Heart left ventricle (tissue), 16 donors: ENCODE measurements at regions of chr6 and their contacts with region 1.

Region 1: DNA sequence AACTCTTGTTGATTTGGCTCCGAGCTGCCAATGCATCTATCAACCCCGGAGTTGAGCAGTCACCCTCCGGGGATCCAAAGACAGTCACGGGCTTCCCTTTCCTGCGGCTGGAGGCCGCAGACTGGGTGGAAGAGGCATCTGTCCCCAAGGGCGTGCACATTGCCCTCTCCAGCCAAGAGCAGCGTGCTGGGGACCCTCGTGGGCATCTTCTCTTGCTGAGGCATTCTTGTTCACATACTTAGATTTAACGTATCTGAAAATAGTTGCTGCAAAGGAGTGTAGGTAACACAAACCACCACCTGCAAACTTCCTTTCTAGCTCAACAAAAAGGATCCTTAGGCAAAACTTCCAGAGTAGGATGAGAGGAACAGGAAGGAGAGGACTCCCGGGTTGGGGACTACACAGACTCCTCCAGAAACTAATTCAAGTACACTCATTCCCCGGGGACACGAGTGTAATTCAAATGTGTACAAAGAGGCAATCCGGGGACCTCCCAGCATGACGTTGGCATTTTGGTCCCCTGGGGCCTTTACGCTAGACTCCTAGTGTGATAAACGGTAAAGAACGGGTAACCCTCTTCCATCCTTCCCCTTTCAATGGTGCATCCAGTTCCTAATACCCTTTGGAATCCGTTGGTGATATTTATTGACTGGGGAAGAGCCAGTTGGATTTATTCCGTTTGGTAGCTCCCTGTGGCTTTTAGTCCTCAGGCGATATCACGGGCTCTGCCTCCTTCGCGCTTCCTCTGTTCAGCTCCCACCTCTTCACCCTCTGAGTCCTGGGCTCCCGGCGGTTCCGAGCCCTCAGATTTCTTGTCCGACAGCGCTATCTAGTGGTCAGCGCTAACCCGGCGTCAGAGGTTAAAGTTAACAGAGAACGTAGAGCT is 2.7 kb upstream of the COL12A1 start:
- DNase-seq: peak; percentile 81 to 87 (median 85)
- ATAC-seq: peak; percentile 62 to 82 (median 70)
- H3K4me3 ChIP-seq: peak overlapping the region in 10 of 12 donors; percentile 17 to 53 (median 36)
- H3K27ac ChIP-seq: peak overlapping the region in 8 of 12 donors; percentile 31 to 80 (median 56)
- H3K4me1 ChIP-seq: peaks cover 0 to 64% (median 33%) of the 10 kb centered on the region in 12 donors
- H3K27me3 ChIP-seq: peaks cover 2 to 50% (median 25%) of the 10 kb centered on the region in 9 donors
- CTCF ChIP-seq: peak; percentile 78 to 95 (median 87)
- POLR2A ChIP-seq: no peak

Region 2: DNA sequence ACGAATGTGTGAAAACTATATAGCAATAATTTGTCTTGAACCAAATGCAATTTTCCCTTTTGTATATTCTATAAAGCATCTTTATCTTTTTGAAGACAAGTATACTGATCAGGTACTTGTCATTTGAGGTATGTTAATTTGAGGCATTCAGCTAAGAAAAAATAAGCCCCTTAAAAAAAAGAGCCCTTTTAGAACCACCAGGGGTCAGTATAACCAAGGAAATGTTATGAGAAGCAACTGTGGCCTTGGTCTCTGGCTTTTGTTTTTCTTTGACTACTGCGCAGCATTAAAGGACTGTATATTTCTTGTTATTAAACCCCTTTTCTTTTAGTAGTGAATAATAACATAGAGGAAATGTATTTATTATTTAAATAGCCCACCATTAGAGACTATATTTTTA is 1469.4 kb before region 1 on chr6:
- intact Hi-C with region 1: loop called (anchors 2 to 5 kb)
- DNase-seq: no peak
- ATAC-seq: peak; percentile 44 to 85 (median 64)
- H3K4me3 ChIP-seq: no peak overlapping the region
- H3K27ac ChIP-seq: no peak overlapping the region
- H3K4me1 ChIP-seq: peaks cover 0 to 11% (median 0%) of the 10 kb centered on the region in 12 donors
- H3K27me3 ChIP-seq: no peaks in the 10 kb centered on the region
- CTCF ChIP-seq: peak; percentile 67 to 90 (median 84)
- POLR2A ChIP-seq: no peak

Region 3: GRCh38 chr6:73854998-73855718 is 1353.4 kb before region 1 on chr6:
- intact Hi-C with region 1: loop called in 9 of 10 experiments (anchors 5 to 10 kb)
- DNase-seq: peak in 1 of 5 donors; percentile 23
- ATAC-seq: peak in 2 of 4 donors; percentile 42 to 68
- H3K4me3 ChIP-seq: peak overlapping the region in 2 of 12 donors; percentile 23 to 25
- H3K27ac ChIP-seq: peak overlapping the region in 7 of 12 donors; percentile 1 to 49 (median 26)
- H3K4me1 ChIP-seq: peaks cover 0 to 3% (median 0%) of the 10 kb centered on the region in 12 donors
- H3K27me3 ChIP-seq: no peaks in the 10 kb centered on the region
- CTCF ChIP-seq: peak; percentile 59 to 94 (median 72)
- POLR2A ChIP-seq: no peak

Region 4: DNA sequence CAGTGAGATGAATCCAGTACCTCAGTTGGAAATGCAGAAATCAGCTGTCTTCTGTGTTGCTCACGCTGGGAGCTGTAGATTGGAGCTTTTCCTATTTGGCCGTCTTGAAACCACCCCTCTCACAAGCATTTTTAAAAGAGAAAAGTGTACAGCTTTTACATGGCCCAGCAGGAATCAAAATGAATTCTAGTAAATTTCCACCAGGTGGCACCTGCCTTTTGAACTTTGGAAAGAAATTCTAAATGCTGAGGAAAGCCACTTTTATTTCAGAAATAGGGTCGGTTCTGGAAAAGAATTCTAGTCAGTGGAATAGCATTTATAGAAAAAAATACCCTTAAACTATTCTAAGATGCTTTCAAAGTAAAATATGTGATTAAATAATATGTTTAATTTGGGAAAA is 864.7 kb before region 1 on chr6:
- intact Hi-C with region 1: loop called in 1 of 10 experiments (anchors 10 kb)
- DNase-seq: no peak
- ATAC-seq: no peak
- H3K4me3 ChIP-seq: no peak overlapping the region
- H3K27ac ChIP-seq: no peak overlapping the region
- H3K4me1 ChIP-seq: peaks cover 0 to 9% (median 0%) of the 10 kb centered on the region in 12 donors
- H3K27me3 ChIP-seq: no peaks in the 10 kb centered on the region
- CTCF ChIP-seq: peak in 3 of 12 donors; percentile 26
- POLR2A ChIP-seq: no peak

Region 5: GRCh38 chr6:74574794-74575193 is 633.7 kb before region 1 on chr6:
- intact Hi-C with region 1: loop called in 2 of 10 experiments (anchors 10 kb)
- DNase-seq: no peak
- ATAC-seq: peak in 1 of 4 donors; percentile 53
- H3K4me3 ChIP-seq: no peak overlapping the region
- H3K27ac ChIP-seq: no peak overlapping the region
- H3K4me1 ChIP-seq: no peaks in the 10 kb centered on the region
- H3K27me3 ChIP-seq: no peaks in the 10 kb centered on the region
- CTCF ChIP-seq: peak; percentile 26 to 59 (median 47)
- POLR2A ChIP-seq: no peak

Region 6: DNA sequence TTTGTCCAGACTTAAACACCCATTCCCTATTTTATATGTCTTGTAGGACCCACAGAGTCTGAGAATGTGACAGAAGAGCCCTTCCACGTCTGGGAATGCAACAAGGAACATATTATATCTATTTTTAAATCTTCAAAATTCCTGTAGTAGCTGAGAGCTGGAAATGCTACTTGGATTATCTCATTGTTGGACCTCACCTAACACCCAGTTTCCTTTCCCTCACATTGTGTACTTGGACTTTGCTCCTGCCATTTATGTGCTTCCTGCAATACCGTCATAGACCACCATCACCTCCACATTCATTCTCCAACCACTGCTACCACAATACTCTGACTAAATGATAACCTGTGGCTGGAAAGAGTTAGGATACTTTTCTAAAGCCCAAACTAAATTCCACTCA is 338.1 kb before region 1 on chr6:
- intact Hi-C with region 1: no loop called
- DNase-seq: no peak
- ATAC-seq: no peak
- H3K4me3 ChIP-seq: no peak overlapping the region
- H3K27ac ChIP-seq: no peak overlapping the region
- H3K4me1 ChIP-seq: no peaks in the 10 kb centered on the region
- H3K27me3 ChIP-seq: no peaks in the 10 kb centered on the region
- CTCF ChIP-seq: peak in 2 of 12 donors; percentile 23 to 39
- POLR2A ChIP-seq: no peak

Region 7: DNA sequence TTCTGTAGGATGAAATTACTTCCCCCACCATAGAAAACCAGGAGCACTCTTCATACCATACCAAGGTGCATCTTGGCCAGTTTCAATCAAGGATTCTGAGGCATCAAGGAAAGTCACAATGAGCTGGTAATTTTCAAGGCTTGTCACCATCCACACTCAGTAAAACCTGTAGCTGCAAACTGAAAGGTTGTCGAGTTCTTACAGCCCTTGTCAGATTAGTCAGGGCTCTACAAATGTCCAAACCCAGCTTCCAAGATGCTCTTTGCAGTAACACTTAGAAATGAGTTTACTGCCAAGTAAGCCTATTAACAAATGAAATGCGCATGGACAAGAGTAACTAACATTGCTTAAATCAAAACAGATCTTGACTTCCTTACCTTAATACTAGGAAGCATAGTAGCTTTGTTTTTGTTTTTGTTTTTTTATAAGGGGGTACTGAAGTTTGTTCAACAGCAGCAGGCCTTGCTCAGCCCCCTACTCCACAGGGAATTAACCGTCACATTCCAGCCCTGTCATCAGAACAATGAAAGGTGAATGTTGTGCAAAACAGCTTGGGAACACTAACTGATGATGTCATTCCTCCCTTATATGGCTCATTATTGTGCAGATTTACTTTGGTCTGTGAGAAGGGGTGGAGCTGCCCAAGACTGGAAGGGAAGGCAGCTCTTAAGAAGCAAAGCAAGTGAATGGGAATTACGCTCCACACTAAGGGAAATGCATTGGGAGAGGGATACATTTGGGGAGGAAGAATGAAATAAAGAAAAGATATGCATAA is 125.9 kb after region 1 on chr6:
- intact Hi-C with region 1: no loop called
- DNase-seq: peak in 1 of 5 donors; percentile 15
- ATAC-seq: peak; percentile 65 to 87 (median 83)
- H3K4me3 ChIP-seq: no peak overlapping the region
- H3K27ac ChIP-seq: peak overlapping the region in 10 of 12 donors; percentile 10 to 64 (median 35)
- H3K4me1 ChIP-seq: peaks cover 11 to 46% (median 23%) of the 10 kb centered on the region in 12 donors
- H3K27me3 ChIP-seq: no peaks in the 10 kb centered on the region
- CTCF ChIP-seq: no peak
- POLR2A ChIP-seq: no peak